ENCODE measurements at regions of chr16 and their contacts with region 1.

Region 1: DNA sequence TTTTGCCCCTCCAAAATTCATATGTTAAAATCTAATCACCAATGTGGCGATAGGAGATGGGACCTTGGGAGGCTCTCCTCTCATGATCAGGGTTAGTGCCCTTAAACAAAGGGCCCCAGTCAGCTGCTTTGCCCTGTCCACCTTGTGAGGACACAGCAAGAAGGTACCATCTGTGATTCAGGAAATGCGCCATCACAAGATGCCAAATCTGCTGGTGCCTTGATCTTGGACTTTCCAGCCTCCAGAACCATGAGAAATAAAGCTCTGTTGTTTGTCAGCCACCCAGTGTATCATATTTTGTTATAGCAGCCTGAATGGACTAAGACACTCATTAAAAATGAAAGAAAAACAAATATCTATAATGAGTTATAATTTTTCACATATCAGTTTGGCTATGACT is 63.0 kb upstream of the NKD1 start:
- DNase-seq: no peak
- H3K4me3 ChIP-seq: no peak overlapping the region
- H3K27ac ChIP-seq: no peak overlapping the region
- H3K4me1 ChIP-seq: no peaks in the 10 kb centered on the region
- H3K27me3 ChIP-seq: no peaks in the 10 kb centered on the region
- CTCF ChIP-seq: no peak

Region 2: DNA sequence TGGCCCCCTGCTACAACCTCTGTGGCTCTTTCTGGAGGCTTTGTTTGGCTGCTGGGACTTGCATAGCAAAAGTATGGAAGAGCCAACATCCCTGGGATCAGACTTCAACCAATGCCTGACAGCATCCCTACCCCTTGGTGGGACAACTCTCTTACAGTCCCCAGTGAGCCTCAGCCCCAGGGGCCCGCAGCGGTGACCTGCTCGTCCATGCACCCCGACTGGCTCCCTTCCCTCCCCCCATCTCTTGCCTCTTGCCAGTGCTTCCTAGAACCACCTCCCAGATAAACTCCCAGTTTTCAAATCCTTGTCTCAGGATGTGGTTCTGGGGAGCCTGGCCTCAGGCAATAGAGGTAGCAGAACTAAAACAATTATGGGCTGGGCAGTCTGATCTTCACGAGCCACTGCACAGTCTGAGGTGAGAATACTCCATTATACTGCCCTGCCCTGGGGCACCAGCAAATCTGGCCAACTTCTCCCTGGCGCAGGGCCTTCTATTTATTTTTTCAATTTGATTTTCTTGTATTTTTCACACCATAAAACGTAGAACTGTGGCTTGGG is 29.9 kb before region 1 on chr16:
- intact Hi-C with region 1: loop called (anchors 2 kb)
- DNase-seq: no peak
- H3K4me3 ChIP-seq: no peak overlapping the region
- H3K27ac ChIP-seq: no peak overlapping the region
- H3K4me1 ChIP-seq: no peaks in the 10 kb centered on the region
- H3K27me3 ChIP-seq: no peaks in the 10 kb centered on the region
- CTCF ChIP-seq: no peak

Region 3: GRCh38 chr16:50644729-50645128 is 159.5 kb after region 1 on chr16:
- intact Hi-C with region 1: no loop called
- DNase-seq: peak in 1 of 2 donors; percentile 76
- H3K4me3 ChIP-seq: no peak overlapping the region
- H3K27ac ChIP-seq: peak overlapping the region in 1 of 2 donors; percentile 17
- H3K4me1 ChIP-seq: peaks cover 0 to 25% (median 7%) of the 10 kb centered on the region in 4 donors
- H3K27me3 ChIP-seq: no peaks in the 10 kb centered on the region
- CTCF ChIP-seq: peak; percentile 44 to 54